ENCODE measurements at regions of chr2 and their contacts with region 1.

Region 1: DNA sequence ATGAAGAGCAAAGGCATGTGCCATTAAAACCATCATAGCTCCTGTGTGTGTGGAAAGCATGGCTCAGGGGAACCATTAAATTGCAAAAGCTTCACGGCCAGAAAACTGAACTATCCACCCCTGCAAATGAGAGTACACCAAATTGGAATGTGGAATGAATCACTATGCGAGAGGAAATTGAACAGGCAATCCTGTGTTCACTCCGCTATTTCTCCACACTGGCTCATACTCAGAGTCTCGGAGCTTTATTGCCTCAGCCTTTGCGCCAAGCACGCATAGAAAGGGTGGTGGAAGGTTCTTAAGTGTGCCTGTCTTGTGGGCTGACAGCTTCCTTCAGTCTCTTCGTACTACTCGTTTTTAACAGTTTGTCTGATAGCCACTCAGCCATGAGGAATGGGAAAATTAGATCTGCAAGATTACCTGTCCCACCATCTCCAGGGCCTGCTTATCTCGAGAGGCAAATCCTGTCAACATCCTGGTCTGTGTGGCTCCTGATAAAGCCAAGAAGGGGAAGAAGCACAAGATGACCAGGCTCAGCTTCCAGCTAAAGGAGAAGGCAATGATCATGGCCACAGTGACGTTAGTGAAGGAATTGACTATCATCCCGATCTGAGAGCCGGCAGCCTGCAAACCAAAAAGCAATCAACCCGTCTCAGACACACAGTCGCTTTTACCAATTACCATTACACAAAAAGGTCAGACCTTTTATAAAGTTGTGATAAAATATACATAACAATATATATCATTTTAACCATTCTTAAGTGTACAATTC is 34.9 kb downstream of the G6PC2 start:
- DNase-seq: no peak
- H3K4me3 ChIP-seq: no peak overlapping the region
- H3K27ac ChIP-seq: no peak overlapping the region
- H3K4me1 ChIP-seq: no peaks in the 10 kb centered on the region
- H3K27me3 ChIP-seq: no peaks in the 10 kb centered on the region
- CTCF ChIP-seq: no peak

Region 2: DNA sequence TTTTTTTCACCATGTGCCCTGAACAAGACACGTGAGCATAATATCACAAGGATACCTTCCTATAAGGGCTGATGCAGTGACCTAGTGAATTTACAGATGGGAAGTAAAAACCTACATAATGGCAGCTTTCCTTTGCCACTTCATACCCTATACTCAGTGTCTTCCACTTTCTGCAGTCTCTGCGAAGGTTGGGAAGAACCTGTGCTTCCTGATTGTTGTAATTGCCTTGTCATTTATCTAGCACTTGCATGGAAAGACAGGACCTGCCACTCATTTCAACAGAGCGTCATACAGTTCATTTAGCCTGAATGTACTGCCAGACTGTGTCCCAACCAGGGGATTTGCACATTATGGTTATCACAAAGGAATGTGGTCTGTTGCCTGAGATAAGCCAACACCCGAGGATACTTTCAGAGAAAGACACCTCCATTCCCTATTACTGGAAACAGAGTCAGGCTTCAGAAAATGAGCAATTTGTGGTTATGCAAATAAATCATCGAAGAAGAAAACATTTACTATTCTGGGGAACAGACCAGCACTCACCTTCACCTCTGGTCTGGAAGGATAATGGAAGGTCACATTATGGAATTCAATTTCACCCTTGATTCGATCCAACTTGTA is 40.1 kb after region 1 on chr2:
- CTCF ChIA-PET with region 1: no interaction called
- POLR2A ChIA-PET with region 1: no interaction called
- intact Hi-C with region 1: no loop called
- DNase-seq: no peak
- H3K4me3 ChIP-seq: no peak overlapping the region
- H3K27ac ChIP-seq: no peak overlapping the region
- H3K4me1 ChIP-seq: no peaks in the 10 kb centered on the region
- H3K27me3 ChIP-seq: no peaks in the 10 kb centered on the region
- CTCF ChIP-seq: no peak

Region 3: DNA sequence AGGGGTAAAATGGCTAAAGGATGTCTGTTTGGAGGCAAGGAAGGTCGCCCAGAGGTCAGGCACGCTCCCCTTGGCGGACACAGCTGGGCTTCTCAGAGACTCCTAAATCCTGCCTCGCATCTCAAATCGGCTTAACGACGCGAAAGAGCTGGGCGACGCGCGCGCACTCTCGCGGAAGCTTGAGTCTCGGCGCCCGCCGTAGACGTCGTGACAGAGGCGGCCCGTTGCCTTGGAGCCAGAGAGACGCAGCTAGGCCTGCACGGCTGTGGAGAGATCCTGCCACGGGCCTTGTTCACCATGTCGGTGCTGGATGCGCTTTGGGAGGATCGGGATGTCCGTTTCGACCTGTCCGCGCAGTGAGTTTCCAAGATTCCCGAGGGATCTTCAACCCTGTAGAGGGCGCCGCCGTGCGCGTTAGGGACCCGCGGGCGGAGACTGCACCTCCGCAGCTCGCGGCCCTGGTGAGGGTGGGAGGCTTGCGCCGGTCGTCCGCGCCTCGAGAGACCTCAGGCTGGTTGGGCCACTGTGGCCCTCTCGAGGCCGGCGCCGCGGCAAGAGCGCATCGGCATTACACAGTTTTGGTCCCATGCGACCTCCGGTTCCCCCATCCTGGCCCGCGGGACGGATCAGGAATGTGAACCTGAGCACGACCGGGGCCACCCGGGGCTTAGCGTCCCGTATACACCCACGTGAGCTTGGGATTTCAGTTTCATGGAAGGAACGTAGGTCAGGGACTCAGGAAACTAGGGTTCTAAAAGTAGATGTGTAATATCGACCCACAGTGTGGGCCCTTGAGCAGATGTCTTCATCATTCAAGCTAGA is 543.5 kb after region 1 on chr2 and contains the start of gene BBS5:
- CTCF ChIA-PET with region 1: no interaction called
- POLR2A ChIA-PET with region 1: interaction called, 11 read pairs
- intact Hi-C with region 1: no loop called
- DNase-seq: peak in 1 of 2 experiments; percentile 20
- H3K4me3 ChIP-seq: peak within 1 kb of the TSS; percentile 33; the same call in 1 of the 2 replicates
- H3K27ac ChIP-seq: no peak within 1 kb of the TSS
- H3K4me1 ChIP-seq: no peaks in the 10 kb centered on the region
- H3K27me3 ChIP-seq: no peaks in the 10 kb centered on the region
- CTCF ChIP-seq: no peak
- total RNA-seq, gene BBS5: 0.31 and 0.38 TPM in 2 replicates